ENCODE measurements at regions of chr22 and their contacts with region 1.

Region 1: GRCh38 chr22:27331526-27332281 is 469.9 kb downstream of the MN1 start:
- DNase-seq: peak; percentile 81
- H3K4me3 ChIP-seq: no peak overlapping the region
- H3K27ac ChIP-seq: no peak overlapping the region
- H3K4me1 ChIP-seq: peaks cover 0 to 6% of the 10 kb centered on the region in 2 experiments; a peak in 1 of 4 replicates
- H3K27me3 ChIP-seq: no peaks in the 10 kb centered on the region
- CTCF ChIP-seq: peak; percentile 49
- EP300 ChIP-seq: no peak
- RAD21 ChIP-seq: peak; percentile 69

Region 2: DNA sequence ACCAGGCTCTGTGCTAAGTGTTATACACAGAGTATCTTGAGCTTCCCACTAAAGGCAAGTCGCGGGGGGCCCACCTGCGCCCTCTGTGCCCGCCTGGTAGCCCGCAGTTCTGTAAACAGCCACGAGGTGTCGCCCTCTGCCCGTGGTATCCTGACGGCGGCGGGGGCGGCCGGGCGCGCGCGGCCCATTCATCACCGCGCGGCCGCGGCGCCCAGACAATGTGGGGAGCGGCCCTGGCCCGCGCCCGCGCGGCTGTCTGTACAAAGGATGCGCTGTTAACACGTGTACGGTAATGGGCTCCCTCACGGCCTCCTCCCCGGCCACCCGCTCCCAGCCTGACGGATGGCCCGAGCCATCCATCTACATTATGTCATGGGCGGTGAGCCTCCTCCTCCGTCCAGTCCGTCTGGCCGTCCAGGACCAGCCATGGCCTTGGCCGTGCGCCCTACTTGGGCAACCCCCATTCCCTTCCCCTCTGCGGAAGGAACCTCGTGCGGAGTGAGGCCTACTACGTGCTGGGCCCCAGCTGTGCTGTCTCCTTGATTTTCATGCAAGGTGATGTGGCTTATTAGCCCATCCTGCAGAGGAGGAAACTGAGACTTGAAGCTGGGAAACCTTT is 574.9 kb before region 1 on chr22:
- CTCF ChIA-PET with region 1: interaction called, 11 read pairs
- POLR2A ChIA-PET with region 1: no interaction called
- DNase-seq: peak; percentile 88
- H3K4me3 ChIP-seq: peak overlapping the region; percentile 27 to 41; a peak in 3 of 4 replicates
- H3K27ac ChIP-seq: no peak overlapping the region
- H3K4me1 ChIP-seq: no peaks in the 10 kb centered on the region; a peak in 1 of 4 replicates
- H3K27me3 ChIP-seq: no peaks in the 10 kb centered on the region
- CTCF ChIP-seq: peak; percentile 94
- EP300 ChIP-seq: no peak
- RAD21 ChIP-seq: peak; percentile 80

Region 3: GRCh38 chr22:27157666-27158370 is 173.9 kb before region 1 on chr22:
- CTCF ChIA-PET with region 1: no interaction called
- POLR2A ChIA-PET with region 1: no interaction called
- DNase-seq: no peak
- H3K4me3 ChIP-seq: no peak overlapping the region
- H3K27ac ChIP-seq: no peak overlapping the region
- H3K4me1 ChIP-seq: peaks cover 0 to 3% of the 10 kb centered on the region in 2 experiments; a peak in 1 of 4 replicates
- H3K27me3 ChIP-seq: peaks cover 16% of the 10 kb centered on the region
- CTCF ChIP-seq: no peak
- EP300 ChIP-seq: no peak
- RAD21 ChIP-seq: no peak

Region 4: GRCh38 chr22:27273436-27273835 is 58.3 kb before region 1 on chr22:
- CTCF ChIA-PET with region 1: no interaction called
- POLR2A ChIA-PET with region 1: no interaction called
- DNase-seq: no peak
- H3K4me3 ChIP-seq: no peak overlapping the region
- H3K27ac ChIP-seq: no peak overlapping the region
- H3K4me1 ChIP-seq: no peaks in the 10 kb centered on the region; a peak in 1 of 4 replicates
- H3K27me3 ChIP-seq: 0 out of 2 replicates have a peak, but pooled peaks cover 7% of the 10 kb centered on the region
- CTCF ChIP-seq: no peak
- EP300 ChIP-seq: no peak
- RAD21 ChIP-seq: no peak

Region 5: DNA sequence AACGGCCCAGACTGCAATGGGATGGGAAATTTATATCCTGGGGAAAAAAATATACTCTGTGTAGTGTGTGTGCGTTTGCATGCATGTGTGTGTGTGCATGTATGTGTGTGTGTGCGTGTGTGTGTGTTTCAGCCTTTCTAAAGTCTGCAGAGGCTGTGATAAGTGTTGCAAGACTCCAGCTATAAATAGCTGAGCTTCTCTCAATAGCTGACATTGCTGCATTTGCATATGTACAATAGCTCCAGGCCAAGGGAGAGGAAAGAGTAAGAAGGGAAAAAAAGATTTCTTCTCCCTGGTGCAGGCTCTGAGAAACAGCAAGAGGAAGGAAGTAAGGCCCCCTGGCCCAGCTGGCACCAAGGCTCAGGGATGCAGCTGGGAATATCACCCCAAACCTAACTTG is 13.2 kb before region 1 on chr22:
- CTCF ChIA-PET with region 1: interaction called, 14 read pairs
- POLR2A ChIA-PET with region 1: no interaction called
- DNase-seq: no peak
- H3K4me3 ChIP-seq: no peak overlapping the region
- H3K27ac ChIP-seq: no peak overlapping the region
- H3K4me1 ChIP-seq: peaks cover 0 to 5% of the 10 kb centered on the region in 2 experiments; a peak in 2 of 4 replicates
- H3K27me3 ChIP-seq: peaks cover 15% of the 10 kb centered on the region
- CTCF ChIP-seq: no peak
- EP300 ChIP-seq: no peak
- RAD21 ChIP-seq: no peak

Measured in SK-N-SH (cell line).